ENCODE measurements at regions of chr1 and their contacts with region 1.

Region 1: DNA sequence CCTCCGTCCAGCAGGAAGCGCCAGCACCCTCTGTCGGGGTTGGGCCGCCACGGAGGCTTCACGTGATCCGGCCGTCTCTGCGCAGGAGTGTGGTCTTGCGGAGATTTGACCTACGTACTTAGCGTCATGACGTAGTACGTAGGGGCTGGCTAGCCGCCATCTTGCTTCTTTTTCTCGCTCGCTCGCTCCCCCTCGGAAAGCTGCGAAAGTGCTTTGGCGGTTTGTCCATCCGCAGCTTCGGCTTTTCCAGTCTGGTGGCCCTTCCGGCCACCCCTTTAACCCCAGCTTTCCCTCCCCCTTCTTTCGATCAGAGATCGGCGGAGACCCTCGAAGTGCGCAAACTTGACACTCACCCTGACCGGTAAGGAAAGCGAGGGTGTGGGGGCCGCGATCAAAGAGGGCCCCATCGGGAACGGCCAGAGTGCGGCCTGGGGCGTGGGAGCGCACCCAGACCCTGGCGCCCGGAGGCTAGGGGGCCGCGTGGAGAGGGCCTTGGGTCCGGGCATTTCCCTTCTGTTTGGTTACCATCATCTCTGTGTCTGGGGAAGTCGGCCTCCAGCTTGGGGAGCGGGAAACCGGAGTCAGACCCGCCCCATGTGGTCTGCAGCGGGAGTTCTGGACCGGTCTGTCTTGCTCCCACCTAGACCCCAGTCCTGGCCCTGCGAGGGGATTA is at the start of gene PRRC2C:
- DNase-seq: peak; percentile 95
- H3K4me3 ChIP-seq: peak within 1 kb of the TSS; percentile 79 to 87 (median 80)
- H3K27ac ChIP-seq: peak within 1 kb of the TSS; percentile 95
- H3K4me1 ChIP-seq: peaks cover 13% of the 10 kb centered on the region
- H3K27me3 ChIP-seq: no peaks in the 10 kb centered on the region
- CTCF ChIP-seq: peak; percentile 8 to 80
- total RNA-seq, gene PRRC2C: 56.3 to 177 TPM

Region 2: GRCh38 chr1:171245458-171246064 is 239.9 kb before region 1 on chr1:
- CTCF ChIA-PET with region 1: no interaction called
- dilution Hi-C with region 1: no loop called
- in situ Hi-C with region 1: no loop called
- intact Hi-C with region 1: loop called (anchors 5 kb)
- DNase-seq: peak; percentile 39
- H3K4me3 ChIP-seq: no peak overlapping the region
- H3K27ac ChIP-seq: no peak overlapping the region
- H3K4me1 ChIP-seq: no peaks in the 10 kb centered on the region
- H3K27me3 ChIP-seq: no peaks in the 10 kb centered on the region
- CTCF ChIP-seq: peak; percentile 90 to 91

Region 3: GRCh38 chr1:171355727-171356126 is 129.8 kb before region 1 on chr1:
- CTCF ChIA-PET with region 1: no interaction called
- dilution Hi-C with region 1: no loop called
- in situ Hi-C with region 1: no loop called
- intact Hi-C with region 1: no loop called
- DNase-seq: no peak
- H3K4me3 ChIP-seq: no peak overlapping the region
- H3K27ac ChIP-seq: no peak overlapping the region
- H3K4me1 ChIP-seq: no peaks in the 10 kb centered on the region
- H3K27me3 ChIP-seq: peaks cover 2% of the 10 kb centered on the region
- CTCF ChIP-seq: no peak

Region 4: GRCh38 chr1:171403371-171403770 is 82.1 kb before region 1 on chr1:
- CTCF ChIA-PET with region 1: no interaction called
- dilution Hi-C with region 1: no loop called
- in situ Hi-C with region 1: no loop called
- intact Hi-C with region 1: loop called (anchors 1 kb)
- DNase-seq: peak; percentile 52
- H3K4me3 ChIP-seq: no peak overlapping the region
- H3K27ac ChIP-seq: peak overlapping the region; percentile 1
- H3K4me1 ChIP-seq: peaks cover 13% of the 10 kb centered on the region
- H3K27me3 ChIP-seq: no peaks in the 10 kb centered on the region
- CTCF ChIP-seq: no peak

Region 5: DNA sequence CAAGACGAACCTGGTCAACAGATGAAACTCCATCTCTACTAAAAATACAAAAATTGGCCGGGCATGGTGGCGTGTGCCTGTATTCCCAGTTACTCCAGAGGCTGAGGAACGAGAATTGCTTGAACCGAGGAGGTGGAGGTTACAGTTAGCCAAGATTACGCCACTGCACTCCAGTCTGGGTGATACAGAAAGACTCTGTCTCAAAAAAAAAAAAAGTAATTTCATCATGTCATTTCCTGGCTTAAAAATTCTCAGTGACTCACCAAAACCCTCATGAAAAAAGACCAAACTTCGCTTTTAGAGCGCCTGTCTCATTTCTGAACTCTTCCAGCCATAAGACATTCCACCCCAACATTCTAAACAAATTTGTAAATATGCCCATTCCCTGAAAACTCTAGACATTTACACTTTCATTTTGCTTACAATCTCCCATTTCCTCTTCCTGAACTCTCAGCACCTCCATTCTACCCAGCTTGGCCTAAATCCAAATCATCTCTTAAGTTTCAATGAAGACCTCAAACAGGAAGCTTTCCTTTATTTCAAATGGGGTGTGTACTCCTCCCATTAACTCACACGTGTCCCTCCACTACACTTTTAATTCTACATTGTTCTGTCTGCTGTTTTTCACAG is 50.7 kb before region 1 on chr1:
- CTCF ChIA-PET with region 1: no interaction called
- dilution Hi-C with region 1: no loop called
- in situ Hi-C with region 1: no loop called
- intact Hi-C with region 1: loop called (anchors 1 kb)
- DNase-seq: peak; percentile 69
- H3K4me3 ChIP-seq: peak overlapping the region in 1 of 3 experiments; percentile 11
- H3K27ac ChIP-seq: peak overlapping the region; percentile 89
- H3K4me1 ChIP-seq: peaks cover 33% of the 10 kb centered on the region
- H3K27me3 ChIP-seq: no peaks in the 10 kb centered on the region
- CTCF ChIP-seq: no peak

Region 6: DNA sequence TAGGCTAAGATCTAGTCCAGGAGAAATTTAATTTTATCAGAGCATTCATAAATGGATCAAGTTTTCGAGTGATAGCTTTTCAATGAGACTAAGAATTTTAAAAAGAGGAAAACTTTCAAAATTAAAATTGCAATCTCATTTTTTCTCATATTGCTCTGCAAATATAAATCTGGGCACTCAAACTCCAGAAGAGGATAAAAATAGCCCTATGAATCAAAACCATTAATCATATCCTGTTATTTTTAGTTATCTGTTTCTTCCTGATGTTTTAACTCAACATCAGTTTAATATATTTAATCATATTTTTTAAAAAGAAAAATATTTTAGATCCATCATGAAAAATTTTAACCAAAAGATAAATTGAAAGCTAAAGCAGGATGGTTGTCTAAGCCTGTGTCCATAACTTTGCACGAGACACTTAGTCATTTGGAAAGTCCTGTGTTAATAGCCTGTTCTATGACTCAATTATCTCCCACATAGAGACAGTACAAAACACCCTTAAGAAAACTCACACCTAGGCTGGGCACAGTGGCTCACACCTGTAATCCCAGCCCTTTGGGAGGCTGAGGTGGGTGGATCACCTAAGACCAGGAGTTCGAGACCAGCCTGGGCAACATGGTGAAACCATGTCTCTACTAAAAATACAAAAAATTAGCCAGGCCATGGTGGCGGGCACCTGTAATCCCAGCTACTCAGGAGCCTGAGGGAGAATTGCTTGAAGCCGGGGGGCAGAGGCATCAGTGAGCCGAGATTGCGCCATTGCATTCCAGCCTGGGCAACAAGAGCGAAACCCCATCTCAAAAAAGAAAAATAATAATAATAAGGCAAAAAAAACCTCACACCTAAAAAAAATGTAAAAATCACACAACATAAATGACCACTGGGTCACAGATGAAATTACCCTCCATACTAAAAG is 17.1 kb before region 1 on chr1:
- CTCF ChIA-PET with region 1: no interaction called
- dilution Hi-C with region 1: no loop called
- in situ Hi-C with region 1: no loop called
- intact Hi-C with region 1: loop called (anchors 2 kb)
- DNase-seq: peak; percentile 90
- H3K4me3 ChIP-seq: no peak overlapping the region
- H3K27ac ChIP-seq: peak overlapping the region; percentile 67
- H3K4me1 ChIP-seq: peaks cover 10% of the 10 kb centered on the region
- H3K27me3 ChIP-seq: no peaks in the 10 kb centered on the region
- CTCF ChIP-seq: no peak

Region 7: GRCh38 chr1:171741872-171742576 is 256.5 kb after region 1 on chr1 and contains the start of gene VAMP4:
- CTCF ChIA-PET with region 1: no interaction called
- dilution Hi-C with region 1: no loop called
- in situ Hi-C with region 1: no loop called
- intact Hi-C with region 1: loop called (anchors 1 kb)
- DNase-seq: peak; percentile 85
- H3K4me3 ChIP-seq: peak within 1 kb of the TSS; percentile 49 to 91 (median 77)
- H3K27ac ChIP-seq: peak within 1 kb of the TSS; percentile 93
- H3K4me1 ChIP-seq: peaks cover 35% of the 10 kb centered on the region
- H3K27me3 ChIP-seq: no peaks in the 10 kb centered on the region
- CTCF ChIP-seq: no peak
- total RNA-seq, gene VAMP4: 6.7 to 13.8 TPM

Measured in mammary epithelial cell (primary cell).